ENCODE measurements at regions of chr6 and their contacts with region 1.

Region 1: DNA sequence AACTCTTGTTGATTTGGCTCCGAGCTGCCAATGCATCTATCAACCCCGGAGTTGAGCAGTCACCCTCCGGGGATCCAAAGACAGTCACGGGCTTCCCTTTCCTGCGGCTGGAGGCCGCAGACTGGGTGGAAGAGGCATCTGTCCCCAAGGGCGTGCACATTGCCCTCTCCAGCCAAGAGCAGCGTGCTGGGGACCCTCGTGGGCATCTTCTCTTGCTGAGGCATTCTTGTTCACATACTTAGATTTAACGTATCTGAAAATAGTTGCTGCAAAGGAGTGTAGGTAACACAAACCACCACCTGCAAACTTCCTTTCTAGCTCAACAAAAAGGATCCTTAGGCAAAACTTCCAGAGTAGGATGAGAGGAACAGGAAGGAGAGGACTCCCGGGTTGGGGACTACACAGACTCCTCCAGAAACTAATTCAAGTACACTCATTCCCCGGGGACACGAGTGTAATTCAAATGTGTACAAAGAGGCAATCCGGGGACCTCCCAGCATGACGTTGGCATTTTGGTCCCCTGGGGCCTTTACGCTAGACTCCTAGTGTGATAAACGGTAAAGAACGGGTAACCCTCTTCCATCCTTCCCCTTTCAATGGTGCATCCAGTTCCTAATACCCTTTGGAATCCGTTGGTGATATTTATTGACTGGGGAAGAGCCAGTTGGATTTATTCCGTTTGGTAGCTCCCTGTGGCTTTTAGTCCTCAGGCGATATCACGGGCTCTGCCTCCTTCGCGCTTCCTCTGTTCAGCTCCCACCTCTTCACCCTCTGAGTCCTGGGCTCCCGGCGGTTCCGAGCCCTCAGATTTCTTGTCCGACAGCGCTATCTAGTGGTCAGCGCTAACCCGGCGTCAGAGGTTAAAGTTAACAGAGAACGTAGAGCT is 2.7 kb upstream of the COL12A1 start:
- DNase-seq: peak; percentile 71
- H3K4me3 ChIP-seq: peak overlapping the region; percentile 6 to 27; a peak in 3 of 4 replicates
- H3K27ac ChIP-seq: no peak overlapping the region
- H3K4me1 ChIP-seq: peaks cover 4% of the 10 kb centered on the region in 2 experiments; a peak in 1 of 4 replicates
- H3K27me3 ChIP-seq: peaks cover 63% of the 10 kb centered on the region
- CTCF ChIP-seq: peak; percentile 96
- EP300 ChIP-seq: no peak
- RAD21 ChIP-seq: peak; percentile 93

Region 2: GRCh38 chr6:73739096-73739495 is 1469.4 kb before region 1 on chr6:
- CTCF ChIA-PET with region 1: interaction called, 85 read pairs
- POLR2A ChIA-PET with region 1: no interaction called
- DNase-seq: peak; percentile 35
- H3K4me3 ChIP-seq: no peak overlapping the region; a peak in 1 of 4 replicates
- H3K27ac ChIP-seq: no peak overlapping the region
- H3K4me1 ChIP-seq: peaks cover 0 to 3% of the 10 kb centered on the region in 2 experiments; a peak in 2 of 4 replicates
- H3K27me3 ChIP-seq: no peaks in the 10 kb centered on the region
- CTCF ChIP-seq: peak; percentile 88
- EP300 ChIP-seq: no peak
- RAD21 ChIP-seq: peak; percentile 84

Region 3: GRCh38 chr6:74091136-74091793 is 1117.3 kb before region 1 on chr6:
- CTCF ChIA-PET with region 1: interaction called, 95 read pairs
- POLR2A ChIA-PET with region 1: no interaction called
- DNase-seq: peak; percentile 18
- H3K4me3 ChIP-seq: no peak overlapping the region; a peak in 1 of 4 replicates
- H3K27ac ChIP-seq: no peak overlapping the region
- H3K4me1 ChIP-seq: no peaks in the 10 kb centered on the region
- H3K27me3 ChIP-seq: no peaks in the 10 kb centered on the region
- CTCF ChIP-seq: peak; percentile 77
- EP300 ChIP-seq: no peak
- RAD21 ChIP-seq: peak; percentile 50

Region 4: DNA sequence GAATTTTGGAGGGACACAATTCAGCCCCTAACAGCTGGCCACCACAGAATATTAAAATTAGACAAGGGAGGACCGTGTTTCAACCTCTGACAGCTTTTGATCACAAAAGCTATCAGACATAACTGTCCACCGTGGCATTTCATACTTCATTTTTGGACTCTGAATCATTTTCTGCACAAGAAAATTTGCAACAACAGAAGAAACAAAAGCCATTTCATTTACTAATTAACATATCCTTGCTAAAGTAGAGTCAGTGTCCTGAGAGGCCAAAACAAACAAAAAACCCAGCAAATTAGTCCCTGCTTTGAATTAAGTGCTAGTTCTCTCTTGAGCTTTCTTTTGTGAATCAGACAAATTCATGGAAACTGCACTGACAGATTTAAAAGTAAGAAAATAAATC is 14.9 kb after region 1 on chr6:
- CTCF ChIA-PET with region 1: interaction called, 45 read pairs
- POLR2A ChIA-PET with region 1: no interaction called
- DNase-seq: no peak
- H3K4me3 ChIP-seq: no peak overlapping the region
- H3K27ac ChIP-seq: no peak overlapping the region
- H3K4me1 ChIP-seq: no peaks in the 10 kb centered on the region
- H3K27me3 ChIP-seq: no peaks in the 10 kb centered on the region
- CTCF ChIP-seq: no peak
- EP300 ChIP-seq: no peak
- RAD21 ChIP-seq: no peak